Head of caudate nucleus (tissue), 42 donors: ENCODE measurements at regions of chr3 and their contacts with region 1.

Region 1: DNA sequence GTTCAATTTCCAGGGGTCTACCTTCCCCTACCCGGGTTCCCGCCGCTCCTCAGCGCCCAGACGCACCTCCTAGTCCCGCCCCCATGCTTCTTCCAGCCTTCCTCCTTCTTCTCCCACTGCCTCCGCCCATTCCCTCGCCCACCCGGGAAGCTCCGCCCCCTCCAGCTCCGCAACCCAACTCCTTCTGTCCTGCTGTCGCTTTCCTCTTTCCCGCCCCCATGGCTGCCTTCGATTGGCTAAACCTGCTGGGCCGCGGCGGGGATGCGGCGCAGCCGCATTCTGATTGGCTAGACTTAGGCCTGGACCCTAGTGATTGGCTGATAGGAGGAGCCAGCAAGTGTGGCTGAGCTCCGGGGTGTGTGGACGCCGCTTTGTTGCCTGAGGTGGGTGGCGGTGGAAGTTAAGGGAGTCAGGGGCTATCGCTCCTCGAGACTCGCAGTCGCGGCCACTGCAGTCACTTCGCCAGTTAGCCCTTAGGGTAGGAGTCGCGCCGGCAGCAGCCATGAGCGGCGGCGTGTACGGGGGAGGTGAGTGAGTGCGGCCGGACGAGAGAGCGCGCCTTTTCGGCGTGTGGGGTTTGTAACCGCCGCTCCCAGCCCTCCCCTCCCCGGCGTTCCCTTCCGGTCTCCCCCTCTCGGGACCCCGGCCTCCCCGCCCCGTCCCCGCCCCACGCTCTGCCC is at the start of gene ACTL6A:
- DNase-seq: peak; percentile 98 to 100 (median 99)

Region 2: GRCh38 chr3:179015551-179016020 is 547.1 kb before region 1 on chr3:
- intact Hi-C with region 1: loop called (anchors 5 kb)
- DNase-seq: peak in 25 of 42 donors; percentile 11 to 87 (median 65)

Region 3: GRCh38 chr3:179322286-179323196 is 240.2 kb before region 1 on chr3 and contains the start of gene ZNF639:
- intact Hi-C with region 1: loop called (anchors 10 kb)
- DNase-seq: peak in 41 of 42 donors; percentile 39 to 89 (median 79)

Region 4: GRCh38 chr3:179347345-179348194 is 215.2 kb before region 1 on chr3 and contains the start of gene MFN1:
- intact Hi-C with region 1: loop called (anchors 5 kb)
- DNase-seq: peak; percentile 89 to 97 (median 94)

Region 5: DNA sequence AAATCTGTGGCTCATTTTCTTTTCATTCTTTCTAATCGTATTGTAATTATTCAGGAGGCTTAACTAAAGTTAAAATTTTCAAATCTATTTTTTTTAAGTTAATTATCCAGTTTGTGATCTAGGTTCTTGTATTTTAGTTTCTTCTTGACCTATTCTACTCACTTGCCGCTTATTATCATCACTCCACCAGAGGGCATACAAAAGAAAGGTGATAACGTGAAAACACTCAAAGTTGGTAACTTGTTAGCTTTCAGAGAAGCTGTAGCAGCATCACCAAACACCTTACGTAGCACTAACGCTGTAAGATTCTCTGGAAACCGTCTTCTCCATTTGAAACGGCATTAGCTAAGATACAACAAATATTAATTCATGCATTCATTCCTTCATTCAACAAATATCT is 116.2 kb before region 1 on chr3:
- intact Hi-C with region 1: loop called (anchors 10 kb)
- DNase-seq: no peak

Region 6: DNA sequence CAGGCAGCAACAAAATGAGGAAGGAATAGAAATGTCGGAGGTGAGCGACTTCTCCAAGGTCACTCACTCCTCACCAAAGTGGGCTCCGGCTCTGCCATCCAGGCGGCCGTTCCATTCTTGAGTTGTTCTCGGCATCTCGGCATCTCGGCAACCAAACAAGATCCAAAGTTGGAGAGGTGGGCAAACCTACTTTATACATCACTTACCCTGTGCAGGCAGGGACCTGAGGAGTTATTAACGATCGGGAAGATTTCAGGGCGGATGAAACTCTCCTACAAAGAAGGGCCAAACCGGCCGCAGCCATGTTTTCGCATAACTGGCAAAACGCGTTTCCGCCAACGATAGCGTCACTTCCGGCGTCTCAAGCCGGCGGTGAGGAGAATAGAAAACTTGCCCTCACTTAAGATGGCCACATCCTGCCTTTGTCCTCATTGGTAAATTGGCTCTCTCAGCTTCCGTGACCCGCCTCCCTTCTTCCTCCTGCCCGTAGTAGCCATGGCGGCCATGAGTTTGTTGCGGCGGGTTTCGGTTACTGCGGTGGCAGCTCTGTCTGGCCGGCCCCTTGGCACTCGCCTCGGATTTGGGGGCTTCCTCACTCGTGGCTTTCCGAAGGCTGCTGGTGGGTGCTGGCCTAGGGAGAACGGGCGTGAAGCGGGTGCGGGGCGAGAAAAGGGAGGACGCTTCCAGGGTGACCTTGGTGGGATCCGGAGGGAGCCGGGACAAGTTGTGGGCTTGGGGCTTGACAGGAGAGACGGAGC is 41.8 kb after region 1 on chr3 and contains the starts of genes MRPL47 and NDUFB5:
- intact Hi-C with region 1: loop called (anchors 2 kb)
- DNase-seq: peak; percentile 92 to 99 (median 97)

Region 7: GRCh38 chr3:179750720-179751328 is 188.1 kb after region 1 on chr3:
- intact Hi-C with region 1: no loop called
- DNase-seq: peak in 7 of 42 donors; percentile 10 to 48 (median 15)